ENCODE measurements at regions of chr4 and their contacts with region 1.

Region 1: GRCh38 chr4:86918539-86919072 is 16.2 kb upstream of the AFF1 start:
- DNase-seq: no peak
- ATAC-seq: peak in 1 of 4 donors; percentile 10
- H3K4me3 ChIP-seq: no peak overlapping the region
- H3K27ac ChIP-seq: no peak overlapping the region
- H3K4me1 ChIP-seq: peaks cover 0 to 12% (median 0%) of the 10 kb centered on the region in 4 donors
- H3K27me3 ChIP-seq: no peaks in the 10 kb centered on the region
- CTCF ChIP-seq: no peak
- POLR2A ChIP-seq: no peak

Region 2: DNA sequence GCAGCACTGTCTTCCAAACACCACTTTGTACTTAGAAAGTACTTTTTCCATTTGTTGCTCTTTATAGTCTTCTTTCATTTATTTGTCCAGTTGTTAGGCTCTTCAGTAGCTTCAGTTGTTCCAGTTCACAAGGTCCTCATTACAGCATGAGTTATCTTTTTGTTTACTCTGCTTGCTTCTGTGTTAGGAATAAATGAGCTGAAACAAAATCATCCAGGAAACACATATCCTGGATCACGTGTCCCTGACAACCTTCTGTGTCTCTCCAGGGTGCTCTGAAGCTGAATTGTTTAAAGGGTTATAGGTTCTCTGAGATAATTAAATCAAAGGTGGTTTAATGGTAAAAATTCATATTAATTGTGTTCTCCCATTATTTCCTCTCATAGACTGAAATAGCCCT is 321.7 kb after region 1 on chr4:
- intact Hi-C with region 1: loop called in 1 of 2 experiments (anchors 10 kb)
- DNase-seq: no peak
- ATAC-seq: peak in 3 of 4 donors; percentile 18 to 50 (median 39)
- H3K4me3 ChIP-seq: no peak overlapping the region
- H3K27ac ChIP-seq: no peak overlapping the region
- H3K4me1 ChIP-seq: no peaks in the 10 kb centered on the region
- H3K27me3 ChIP-seq: no peaks in the 10 kb centered on the region
- CTCF ChIP-seq: no peak
- POLR2A ChIP-seq: no peak

Measured in right lobe of liver (tissue), 6 donors.